CD4-positive, alpha-beta memory T cell (primary cell): ENCODE measurements at regions of chr21 and their contacts with region 1.

Region 1: DNA sequence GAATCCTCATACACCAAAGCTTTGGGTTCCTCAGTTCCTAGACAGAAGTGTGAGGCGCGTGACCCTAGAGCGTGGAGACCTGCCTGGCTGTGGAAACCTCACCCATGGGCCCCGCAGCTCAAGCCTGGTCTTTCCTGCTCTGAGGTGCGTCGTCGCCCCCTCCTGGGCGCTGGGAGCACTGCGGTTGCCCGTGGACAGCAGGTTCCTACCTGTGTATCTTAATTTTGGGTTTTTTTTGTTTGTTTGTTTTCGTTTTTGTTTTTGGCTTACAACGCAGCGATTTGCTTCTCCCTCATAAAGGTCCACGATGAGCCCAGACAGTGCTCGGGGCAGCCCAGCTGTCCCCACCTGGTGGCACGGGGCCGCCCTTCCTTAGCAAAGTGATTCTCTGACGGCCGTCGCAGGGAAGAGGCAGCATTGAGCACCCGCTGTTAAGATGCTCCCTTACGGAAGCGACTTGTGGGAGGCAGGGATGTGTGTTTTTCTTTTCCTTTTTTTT is 36.6 kb upstream of the TRAPPC10 start:
- DNase-seq: peak; percentile 73 to 83 (median 77)
- H3K4me3 ChIP-seq: no peak overlapping the region
- H3K4me3 Mint-ChIP-seq: no peak overlapping the region
- H3K27ac ChIP-seq: no peak overlapping the region
- H3K27ac Mint-ChIP-seq: peak overlapping the region in 4 of 7 donors; percentile 0 to 97 (median 72)
- H3K4me1 ChIP-seq: peaks cover 3% of the 10 kb centered on the region
- H3K4me1 Mint-ChIP-seq: peaks cover 11 to 18% (median 13%) of the 10 kb centered on the region in 4 donors
- H3K27me3 ChIP-seq: no peaks in the 10 kb centered on the region
- H3K27me3 Mint-ChIP-seq: no peaks in the 10 kb centered on the region

Region 2: DNA sequence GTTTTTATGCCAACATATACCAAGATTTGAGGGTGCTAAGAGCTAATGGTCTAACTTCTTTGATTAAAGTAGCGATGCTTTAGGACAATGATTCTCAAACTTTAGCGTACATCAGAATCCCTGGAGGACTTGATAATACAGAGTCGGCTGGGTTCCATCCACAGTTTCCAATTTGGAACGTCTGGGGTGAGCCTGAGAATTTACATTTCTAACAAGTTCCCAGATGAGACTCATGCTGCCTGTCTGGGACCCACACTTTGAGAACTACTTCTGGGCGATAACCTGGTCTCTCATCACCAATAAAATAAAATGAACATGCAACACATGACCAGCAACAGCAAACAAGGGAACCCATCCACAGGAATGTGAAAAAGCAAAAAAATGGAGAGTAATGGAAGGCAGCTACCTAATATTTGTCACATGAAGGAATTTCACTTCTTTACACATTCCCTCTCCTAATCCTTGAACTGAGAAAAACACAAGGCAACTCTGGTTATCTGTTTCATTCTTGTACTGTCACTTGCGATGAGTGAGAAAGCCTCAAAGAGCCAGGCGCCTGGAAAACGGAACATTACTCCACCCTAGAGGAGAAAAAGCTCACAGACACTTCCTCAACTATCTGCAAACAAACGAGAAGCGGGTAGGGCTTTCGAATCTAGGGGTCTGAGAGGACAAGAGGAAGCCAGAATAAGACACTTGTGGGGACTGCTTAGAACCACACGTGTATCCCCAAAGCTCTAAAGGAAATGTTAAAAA is 330.2 kb before region 1 on chr21:
- CTCF ChIA-PET with region 1: no interaction called
- POLR2A ChIA-PET with region 1: no interaction called
- intact Hi-C with region 1: no loop called
- DNase-seq: no peak
- H3K4me3 ChIP-seq: no peak overlapping the region
- H3K4me3 Mint-ChIP-seq: no peak overlapping the region
- H3K27ac ChIP-seq: no peak overlapping the region
- H3K27ac Mint-ChIP-seq: no peak overlapping the region
- H3K4me1 ChIP-seq: peaks cover 8% of the 10 kb centered on the region
- H3K4me1 Mint-ChIP-seq: peaks cover 3 to 8% (median 7%) of the 10 kb centered on the region in 4 donors
- H3K27me3 ChIP-seq: no peaks in the 10 kb centered on the region
- H3K27me3 Mint-ChIP-seq: peaks cover 3 to 4% of the 10 kb centered on the region in 2 donors

Region 3: GRCh38 chr21:43810505-43811261 is 164.9 kb before region 1 on chr21:
- CTCF ChIA-PET with region 1: interaction called, 68 read pairs
- POLR2A ChIA-PET with region 1: no interaction called
- intact Hi-C with region 1: no loop called
- DNase-seq: peak; percentile 77 to 85 (median 78)
- H3K4me3 ChIP-seq: no peak overlapping the region
- H3K4me3 Mint-ChIP-seq: peak overlapping the region in 1 of 8 donors; percentile 20
- H3K27ac ChIP-seq: no peak overlapping the region
- H3K27ac Mint-ChIP-seq: peak overlapping the region in 1 of 7 donors; percentile 30
- H3K4me1 ChIP-seq: peaks cover 8% of the 10 kb centered on the region
- H3K4me1 Mint-ChIP-seq: peaks cover 6 to 15% (median 7%) of the 10 kb centered on the region in 4 donors
- H3K27me3 ChIP-seq: no peaks in the 10 kb centered on the region
- H3K27me3 Mint-ChIP-seq: peaks cover 0 to 2% of the 10 kb centered on the region in 2 donors

Region 4: GRCh38 chr21:43921979-43922945 is 53.3 kb before region 1 on chr21:
- CTCF ChIA-PET with region 1: no interaction called
- POLR2A ChIA-PET with region 1: no interaction called
- intact Hi-C with region 1: no loop called
- DNase-seq: peak; percentile 30 to 71 (median 43)
- H3K4me3 ChIP-seq: no peak overlapping the region
- H3K4me3 Mint-ChIP-seq: peak overlapping the region; percentile 49 to 82 (median 75)
- H3K27ac ChIP-seq: peak overlapping the region; percentile 18
- H3K27ac Mint-ChIP-seq: peak overlapping the region; percentile 83 to 95 (median 87)
- H3K4me1 ChIP-seq: peaks cover 49% of the 10 kb centered on the region
- H3K4me1 Mint-ChIP-seq: peaks cover 33 to 56% (median 44%) of the 10 kb centered on the region in 4 donors
- H3K27me3 ChIP-seq: no peaks in the 10 kb centered on the region
- H3K27me3 Mint-ChIP-seq: no peaks in the 10 kb centered on the region

Region 5: DNA sequence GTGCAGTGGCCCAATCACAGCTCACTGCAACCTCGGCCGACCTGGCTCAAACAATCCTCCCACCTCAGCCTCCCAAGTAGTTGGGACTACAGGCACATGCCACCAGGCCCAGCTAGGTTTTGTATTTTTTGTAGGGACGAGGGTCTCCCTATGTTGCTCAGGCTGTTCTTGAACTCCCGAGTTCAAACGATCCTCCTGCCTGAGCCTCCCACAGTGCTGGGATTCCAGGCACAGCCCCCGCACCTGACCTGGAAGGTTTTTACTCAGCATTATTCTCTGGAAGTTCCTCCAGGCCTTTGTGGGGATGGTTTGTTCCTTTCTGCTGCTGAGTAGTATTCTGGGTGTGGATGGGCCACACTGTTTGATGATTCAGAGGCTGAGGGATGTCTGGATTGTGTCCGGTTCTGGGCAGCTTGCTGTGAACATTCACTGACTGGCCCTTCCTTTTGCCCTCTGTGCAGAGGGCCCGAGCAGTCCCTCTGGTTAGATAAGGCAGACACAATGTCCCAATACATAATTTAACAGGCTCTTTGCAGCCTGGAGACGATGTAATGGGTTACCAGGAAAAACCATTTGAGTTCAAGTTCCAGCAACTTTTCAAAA is 30.6 kb after region 1 on chr21:
- CTCF ChIA-PET with region 1: no interaction called
- POLR2A ChIA-PET with region 1: no interaction called
- intact Hi-C with region 1: no loop called
- DNase-seq: no peak
- H3K4me3 ChIP-seq: no peak overlapping the region
- H3K4me3 Mint-ChIP-seq: no peak overlapping the region
- H3K27ac ChIP-seq: no peak overlapping the region
- H3K27ac Mint-ChIP-seq: peak overlapping the region in 3 of 7 donors; percentile 31 to 68 (median 63)
- H3K4me1 ChIP-seq: peaks cover 4% of the 10 kb centered on the region
- H3K4me1 Mint-ChIP-seq: peaks cover 8 to 10% (median 9%) of the 10 kb centered on the region in 4 donors
- H3K27me3 ChIP-seq: no peaks in the 10 kb centered on the region
- H3K27me3 Mint-ChIP-seq: no peaks in the 10 kb centered on the region